HepG2 (cell line): ENCODE measurements at regions of chr11 and their contacts with region 1.

Region 1: GRCh38 chr11:122628810-122629555 is 26.5 kb upstream of the UBASH3B start:
- DNase-seq: peak; percentile 65
- ATAC-seq: peak; percentile 94
- H3K4me3 ChIP-seq: no peak overlapping the region
- H3K27ac ChIP-seq: no peak overlapping the region
- H3K4me1 ChIP-seq: peaks cover 12% of the 10 kb centered on the region
- H3K27me3 ChIP-seq: peaks cover 2 to 14% of the 10 kb centered on the region in 2 experiments; a peak in 1 of 5 replicates
- CTCF ChIP-seq: peak; percentile 85
- EP300 ChIP-seq: no peak
- POLR2A ChIP-seq: no peak
- RAD21 ChIP-seq: peak; percentile 69

Region 2: DNA sequence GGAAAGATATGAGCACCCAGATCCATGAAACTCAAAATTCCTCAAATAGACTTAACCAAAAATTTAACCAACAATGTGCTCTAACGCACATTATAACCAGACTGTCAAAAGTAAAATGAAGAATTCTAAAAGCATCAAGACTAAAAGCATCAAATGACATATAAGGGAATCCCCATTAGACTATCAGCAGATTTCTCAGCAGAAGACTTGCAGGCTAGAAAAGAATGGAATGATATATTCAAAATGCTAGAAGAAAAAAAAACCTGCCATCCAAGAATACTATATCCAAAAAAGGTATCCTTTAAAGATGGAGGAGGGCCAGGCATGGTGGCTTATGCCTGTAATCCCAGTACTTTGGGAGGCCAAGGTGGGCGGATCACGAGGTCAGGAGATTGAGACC is 90.9 kb before region 1 on chr11:
- CTCF ChIA-PET with region 1: no interaction called
- POLR2A ChIA-PET with region 1: no interaction called
- in situ Hi-C with region 1: no loop called
- intact Hi-C with region 1: no loop called
- DNase-seq: no peak
- ATAC-seq: no peak
- H3K4me3 ChIP-seq: no peak overlapping the region
- H3K27ac ChIP-seq: no peak overlapping the region
- H3K4me1 ChIP-seq: no peaks in the 10 kb centered on the region
- H3K27me3 ChIP-seq: no peaks in the 10 kb centered on the region; a peak in 1 of 5 replicates
- CTCF ChIP-seq: no peak
- EP300 ChIP-seq: no peak
- POLR2A ChIP-seq: no peak
- RAD21 ChIP-seq: no peak

Region 3: DNA sequence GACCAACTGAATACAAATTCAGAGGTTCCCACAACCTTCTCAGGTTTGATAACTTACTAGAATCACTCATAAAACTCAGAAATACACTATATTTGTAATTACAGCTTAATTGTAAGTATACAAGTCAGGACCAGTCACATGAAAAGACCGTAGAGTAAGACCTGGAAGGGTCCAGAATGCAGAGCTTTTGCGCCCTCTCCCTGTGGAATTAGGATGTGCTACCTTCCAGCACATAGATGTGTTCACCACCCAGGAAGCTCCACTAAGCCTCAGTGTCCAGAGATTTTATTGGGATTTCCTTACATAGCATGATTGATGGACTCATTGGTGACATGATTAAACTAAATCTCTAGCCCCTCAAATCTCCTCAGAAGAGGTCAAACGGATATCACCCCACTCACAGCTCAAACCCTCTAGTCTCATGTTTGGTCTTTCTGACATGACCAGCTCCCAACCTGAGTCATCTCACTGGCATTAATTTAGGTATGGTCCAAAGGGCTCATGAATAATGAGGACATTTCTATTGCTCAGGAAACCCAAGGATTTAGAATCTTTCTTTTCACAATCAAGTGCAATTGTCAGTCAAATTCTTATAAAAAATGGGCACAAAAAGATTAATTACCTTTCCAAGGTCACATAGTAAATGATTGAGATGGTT is 50.7 kb before region 1 on chr11:
- CTCF ChIA-PET with region 1: no interaction called
- POLR2A ChIA-PET with region 1: no interaction called
- in situ Hi-C with region 1: no loop called
- intact Hi-C with region 1: loop called (anchors 2 kb)
- DNase-seq: peak; percentile 6
- ATAC-seq: peak; percentile 58
- H3K4me3 ChIP-seq: no peak overlapping the region
- H3K27ac ChIP-seq: no peak overlapping the region
- H3K4me1 ChIP-seq: peaks cover 8% of the 10 kb centered on the region; the same call in 1 of the 2 replicates
- H3K27me3 ChIP-seq: no peaks in the 10 kb centered on the region
- CTCF ChIP-seq: peak; percentile 45
- EP300 ChIP-seq: no peak
- POLR2A ChIP-seq: no peak
- RAD21 ChIP-seq: no peak

Region 4: DNA sequence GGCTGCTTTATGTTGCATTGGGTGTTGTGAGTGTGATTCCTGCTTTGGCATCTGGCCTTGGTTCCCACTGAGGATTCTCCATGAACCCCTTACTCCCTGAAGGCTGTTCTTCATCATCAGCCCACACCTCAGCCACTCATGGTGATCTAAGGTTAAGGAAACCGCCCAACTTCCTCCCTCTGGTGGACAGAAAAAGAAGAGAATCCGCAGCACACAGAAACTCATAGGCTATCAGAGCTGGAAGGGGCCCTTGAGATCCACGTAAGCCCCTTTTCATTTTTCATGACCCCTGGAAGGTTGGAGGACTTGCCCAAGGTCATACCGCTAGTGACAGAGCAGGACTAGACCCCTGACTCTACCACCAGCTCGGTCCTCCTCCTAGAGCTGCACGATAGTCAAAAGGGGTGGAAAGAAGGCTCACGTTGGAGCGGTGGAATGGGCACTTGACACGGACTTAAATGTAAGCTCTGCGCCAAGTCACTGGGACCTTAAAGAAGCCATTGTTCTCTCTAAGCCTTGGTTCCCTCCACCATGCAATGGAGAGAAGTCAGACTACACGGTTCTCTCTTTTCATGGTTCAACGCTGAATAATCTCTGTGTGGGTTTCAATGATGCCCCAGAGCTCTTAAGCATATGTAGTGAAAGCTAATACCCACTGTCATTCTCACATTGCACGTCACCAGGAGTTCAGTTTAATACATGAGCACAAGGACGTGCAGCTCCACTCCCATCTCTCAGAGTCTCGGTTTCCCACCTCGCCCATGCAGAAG is 125.8 kb after region 1 on chr11:
- CTCF ChIA-PET with region 1: interaction called, 25 read pairs
- POLR2A ChIA-PET with region 1: no interaction called
- in situ Hi-C with region 1: no loop called
- intact Hi-C with region 1: loop called (anchors 1 kb)
- DNase-seq: peak; percentile 24
- ATAC-seq: peak; percentile 93
- H3K4me3 ChIP-seq: no peak overlapping the region
- H3K27ac ChIP-seq: no peak overlapping the region
- H3K4me1 ChIP-seq: no peaks in the 10 kb centered on the region
- H3K27me3 ChIP-seq: no peaks in the 10 kb centered on the region
- CTCF ChIP-seq: peak; percentile 65
- EP300 ChIP-seq: no peak
- POLR2A ChIP-seq: no peak
- RAD21 ChIP-seq: peak; percentile 76

Region 5: GRCh38 chr11:122781378-122782195 is 152.6 kb after region 1 on chr11:
- CTCF ChIA-PET with region 1: interaction called, 32 read pairs
- POLR2A ChIA-PET with region 1: no interaction called
- in situ Hi-C with region 1: loop called (anchors 5 kb)
- intact Hi-C with region 1: loop called (anchors 1 kb)
- DNase-seq: peak; percentile 58
- ATAC-seq: peak; percentile 99
- H3K4me3 ChIP-seq: no peak overlapping the region
- H3K27ac ChIP-seq: no peak overlapping the region
- H3K4me1 ChIP-seq: no peaks in the 10 kb centered on the region
- H3K27me3 ChIP-seq: no peaks in the 10 kb centered on the region
- CTCF ChIP-seq: peak; percentile 92
- EP300 ChIP-seq: no peak
- POLR2A ChIP-seq: no peak
- RAD21 ChIP-seq: peak; percentile 81

Region 6: DNA sequence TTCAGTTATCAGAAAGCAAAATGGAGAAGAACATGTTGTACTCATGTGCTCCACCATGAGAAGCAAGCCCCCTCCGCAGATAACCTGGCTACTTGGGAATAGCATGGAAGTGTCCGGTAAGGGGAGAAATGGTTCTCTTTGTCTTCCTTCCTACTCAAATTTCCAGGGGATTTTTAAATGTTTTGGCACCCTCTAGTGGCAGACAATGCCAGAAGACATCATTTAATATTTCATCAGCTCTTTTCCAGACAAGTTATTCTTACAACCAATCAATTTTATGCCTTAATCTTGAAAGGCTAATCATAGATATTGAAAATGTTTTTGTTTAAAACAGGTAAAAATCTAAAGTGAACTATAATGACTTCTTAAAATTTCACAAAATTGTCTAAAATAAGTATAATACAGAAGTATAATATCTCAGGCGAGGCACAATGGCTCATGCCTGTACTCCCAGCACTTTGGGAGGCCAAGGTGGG is 225.0 kb after region 1 on chr11:
- CTCF ChIA-PET with region 1: interaction called, 16 read pairs
- POLR2A ChIA-PET with region 1: no interaction called
- in situ Hi-C with region 1: loop called (anchors 5 kb)
- intact Hi-C with region 1: loop called (anchors 1 kb)
- DNase-seq: peak; percentile 66
- ATAC-seq: peak; percentile 62
- H3K4me3 ChIP-seq: no peak overlapping the region
- H3K27ac ChIP-seq: no peak overlapping the region
- H3K4me1 ChIP-seq: no peaks in the 10 kb centered on the region
- H3K27me3 ChIP-seq: peaks cover 2 to 25% of the 10 kb centered on the region in 2 experiments; a peak in 2 of 5 replicates
- CTCF ChIP-seq: peak; percentile 74
- EP300 ChIP-seq: no peak
- POLR2A ChIP-seq: no peak
- RAD21 ChIP-seq: peak; percentile 30; the same call in 1 of the 2 replicates